ENCODE measurements at regions of chr12 and their contacts with region 1.

Region 1: DNA sequence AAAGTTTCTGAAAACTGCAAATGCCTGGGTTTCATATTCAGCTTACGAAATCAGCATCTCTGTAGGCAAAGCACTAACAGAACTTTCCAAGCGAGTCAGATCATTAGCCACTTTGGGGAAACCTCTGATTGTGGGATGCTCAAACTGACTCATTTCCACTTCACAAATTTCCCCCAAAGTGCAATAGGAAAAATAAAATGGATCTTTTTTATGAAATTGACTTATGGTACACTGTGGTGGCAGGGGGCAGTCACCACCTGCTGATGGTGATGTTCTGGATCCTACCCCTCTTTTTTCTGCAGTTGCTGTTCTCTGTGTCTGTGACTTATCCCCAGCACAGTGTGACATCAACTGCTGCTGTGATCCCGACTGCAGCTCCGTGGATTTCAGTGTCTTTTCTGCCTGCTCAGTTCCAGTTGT is 5.6 kb downstream of the TCTN1 start:
- DNase-seq: peak; percentile 76
- ATAC-seq: peak; percentile 75
- H3K4me3 ChIP-seq: peak overlapping the region in 4 of 5 experiments; percentile 30 to 55 (median 44)
- H3K4me3 Mint-ChIP-seq: peak overlapping the region; percentile 89
- H3K27ac ChIP-seq: peak overlapping the region; percentile 63 to 76
- H3K27ac Mint-ChIP-seq: peak overlapping the region; percentile 96
- H3K4me1 ChIP-seq: peaks cover 60 to 81% of the 10 kb centered on the region in 2 donors
- H3K4me1 Mint-ChIP-seq: peaks cover 65% of the 10 kb centered on the region
- H3K27me3 ChIP-seq: no peaks in the 10 kb centered on the region
- H3K27me3 Mint-ChIP-seq: no peaks in the 10 kb centered on the region
- CTCF ChIP-seq: peak; percentile 62

Region 2: GRCh38 chr12:110606253-110606611 is 13.3 kb before region 1 on chr12:
- CTCF ChIA-PET with region 1: interaction called, 91 read pairs
- POLR2A ChIA-PET with region 1: interaction called, 10 read pairs
- intact Hi-C with region 1: loop called (anchors 2 kb)
- DNase-seq: peak; percentile 43
- ATAC-seq: no peak
- H3K4me3 ChIP-seq: peak overlapping the region; percentile 7 to 74 (median 55)
- H3K4me3 Mint-ChIP-seq: peak overlapping the region; percentile 77
- H3K27ac ChIP-seq: peak overlapping the region; percentile 77 to 94
- H3K27ac Mint-ChIP-seq: peak overlapping the region; percentile 88
- H3K4me1 ChIP-seq: peaks cover 71 to 83% of the 10 kb centered on the region in 2 donors
- H3K4me1 Mint-ChIP-seq: peaks cover 65% of the 10 kb centered on the region
- H3K27me3 ChIP-seq: no peaks in the 10 kb centered on the region
- H3K27me3 Mint-ChIP-seq: no peaks in the 10 kb centered on the region
- CTCF ChIP-seq: no peak

Region 3: GRCh38 chr12:110647631-110648040 is 28.1 kb after region 1 on chr12:
- CTCF ChIA-PET with region 1: interaction called, 56 read pairs
- POLR2A ChIA-PET with region 1: interaction called, 6 read pairs
- intact Hi-C with region 1: loop called (anchors 1 kb)
- DNase-seq: peak; percentile 95
- ATAC-seq: peak; percentile 85
- H3K4me3 ChIP-seq: peak overlapping the region in 1 of 5 experiments; percentile 5
- H3K4me3 Mint-ChIP-seq: peak overlapping the region; percentile 79
- H3K27ac ChIP-seq: peak overlapping the region; percentile 90
- H3K27ac Mint-ChIP-seq: peak overlapping the region; percentile 98
- H3K4me1 ChIP-seq: peaks cover 90% of the 10 kb centered on the region in 2 donors
- H3K4me1 Mint-ChIP-seq: peaks cover 91% of the 10 kb centered on the region
- H3K27me3 ChIP-seq: no peaks in the 10 kb centered on the region
- H3K27me3 Mint-ChIP-seq: no peaks in the 10 kb centered on the region
- CTCF ChIP-seq: no peak

Region 4: GRCh38 chr12:110670161-110670701 is 50.7 kb after region 1 on chr12:
- CTCF ChIA-PET with region 1: interaction called, 22 read pairs
- POLR2A ChIA-PET with region 1: interaction called, 11 read pairs
- intact Hi-C with region 1: no loop called
- DNase-seq: peak; percentile 84
- ATAC-seq: peak; percentile 46
- H3K4me3 ChIP-seq: peak overlapping the region in 1 of 5 experiments; percentile 15
- H3K4me3 Mint-ChIP-seq: peak overlapping the region; percentile 84
- H3K27ac ChIP-seq: peak overlapping the region; percentile 84 to 99
- H3K27ac Mint-ChIP-seq: peak overlapping the region; percentile 96
- H3K4me1 ChIP-seq: peaks cover 91 to 100% of the 10 kb centered on the region in 2 donors
- H3K4me1 Mint-ChIP-seq: peaks cover 86% of the 10 kb centered on the region
- H3K27me3 ChIP-seq: no peaks in the 10 kb centered on the region
- H3K27me3 Mint-ChIP-seq: no peaks in the 10 kb centered on the region
- CTCF ChIP-seq: no peak

Region 5: GRCh38 chr12:110888256-110888991 is 268.9 kb after region 1 on chr12:
- CTCF ChIA-PET with region 1: interaction called, 5 read pairs
- POLR2A ChIA-PET with region 1: no interaction called
- intact Hi-C with region 1: loop called (anchors 1 kb)
- DNase-seq: no peak
- ATAC-seq: no peak
- H3K4me3 ChIP-seq: peak overlapping the region in 1 of 5 experiments; percentile 62
- H3K4me3 Mint-ChIP-seq: peak overlapping the region; percentile 95
- H3K27ac ChIP-seq: no peak overlapping the region
- H3K27ac Mint-ChIP-seq: peak overlapping the region; percentile 43
- H3K4me1 ChIP-seq: peaks cover 0 to 10% of the 10 kb centered on the region in 2 donors
- H3K4me1 Mint-ChIP-seq: peaks cover 4% of the 10 kb centered on the region
- H3K27me3 ChIP-seq: no peaks in the 10 kb centered on the region
- H3K27me3 Mint-ChIP-seq: no peaks in the 10 kb centered on the region
- CTCF ChIP-seq: peak; percentile 62

Measured in B cell (primary cell).